ENCODE measurements at regions of chr1 and their contacts with region 1.

Region 1: GRCh38 chr1:155859234-155859829 is at the start of gene SYT11:
- DNase-seq: peak; percentile 99
- H3K4me3 Mint-ChIP-seq: peak within 1 kb of the TSS; percentile 99
- H3K27ac Mint-ChIP-seq: no peak within 1 kb of the TSS
- H3K4me1 Mint-ChIP-seq: peaks cover 16% of the 10 kb centered on the region
- H3K27me3 Mint-ChIP-seq: peaks cover 20% of the 10 kb centered on the region
- CTCF ChIP-seq: no peak
- total RNA-seq, gene SYT11: 0.14 TPM in 1 of 2 replicates, not detected in the other

Region 2: DNA sequence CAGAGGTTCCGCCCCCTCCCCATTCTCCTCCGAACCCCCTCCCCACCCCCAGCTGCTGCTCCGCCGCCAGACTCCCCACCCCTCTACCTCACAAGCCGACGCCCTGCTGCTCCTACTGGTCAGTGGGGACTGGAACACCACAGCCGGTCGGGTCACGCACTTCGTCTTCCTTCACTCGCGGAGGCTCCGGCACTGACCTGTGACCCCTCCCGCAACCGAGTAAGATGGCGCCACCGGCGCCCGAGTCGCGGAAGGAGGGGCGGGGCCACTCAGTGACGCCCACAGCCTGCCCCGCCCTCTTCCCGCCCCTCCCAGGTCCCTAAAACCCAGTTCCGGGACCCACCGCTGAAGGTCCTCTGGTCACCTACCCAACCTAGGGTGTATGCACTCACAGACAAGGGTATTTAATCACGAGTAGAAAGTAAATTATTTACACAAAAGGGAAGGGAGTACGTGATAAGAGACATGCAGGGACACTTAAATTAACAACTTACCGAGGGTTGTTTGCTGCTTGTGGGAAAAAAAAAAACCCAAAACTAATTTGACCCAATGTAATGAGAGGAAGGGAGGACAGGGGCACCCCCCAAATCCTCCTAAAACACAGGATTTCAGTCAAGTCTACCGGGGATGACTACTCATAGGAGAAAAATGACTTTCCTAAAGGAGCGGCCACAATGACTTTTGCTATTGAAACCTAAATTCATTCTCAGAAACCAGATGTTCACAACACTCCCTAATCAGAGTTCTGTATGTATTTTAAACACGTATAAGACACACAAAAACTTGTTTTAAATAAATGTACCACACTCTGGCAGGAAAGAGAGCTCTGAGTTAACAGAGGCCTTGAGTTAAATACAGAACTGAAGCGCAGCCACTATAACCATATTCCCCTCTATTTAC is 52.1 kb after region 1 on chr1 and contains the start of gene RIT1:
- CTCF ChIA-PET with region 1: no interaction called
- POLR2A ChIA-PET with region 1: interaction called, 4 read pairs
- intact Hi-C with region 1: loop called (anchors 5 kb)
- DNase-seq: peak; percentile 88
- H3K4me3 Mint-ChIP-seq: peak within 1 kb of the TSS; percentile 87
- H3K27ac Mint-ChIP-seq: peak within 1 kb of the TSS; percentile 96
- H3K4me1 Mint-ChIP-seq: peaks cover 20% of the 10 kb centered on the region
- H3K27me3 Mint-ChIP-seq: no peaks in the 10 kb centered on the region
- CTCF ChIP-seq: no peak
- total RNA-seq, gene RIT1: 36.2 and 43.1 TPM in 2 replicates